ENCODE measurements at regions of chr1 and their contacts with region 1.

Region 1: GRCh38 chr1:203839059-203839458 is 22.3 kb upstream of the SNRPE start:
- DNase-seq: no peak
- ATAC-seq: peak in 2 of 8 donors; percentile 61 to 68
- H3K4me3 ChIP-seq: no peak overlapping the region
- H3K27ac ChIP-seq: no peak overlapping the region
- H3K4me1 ChIP-seq: peaks cover 0 to 14% (median 4%) of the 10 kb centered on the region in 9 donors
- H3K27me3 ChIP-seq: no peaks in the 10 kb centered on the region
- CTCF ChIP-seq: no peak

Region 2: GRCh38 chr1:203726417-203726867 is 112.6 kb before region 1 on chr1:
- intact Hi-C with region 1: loop called in 2 of 10 experiments (anchors 10 kb)
- DNase-seq: no peak
- ATAC-seq: peak in 3 of 8 donors; percentile 25 to 66 (median 53)
- H3K4me3 ChIP-seq: no peak overlapping the region
- H3K27ac ChIP-seq: no peak overlapping the region
- H3K4me1 ChIP-seq: peaks cover 0 to 9% (median 0%) of the 10 kb centered on the region in 9 donors
- H3K27me3 ChIP-seq: no peaks in the 10 kb centered on the region
- CTCF ChIP-seq: no peak

Region 3: GRCh38 chr1:203733009-203733863 is 105.8 kb before region 1 on chr1:
- intact Hi-C with region 1: loop called in 2 of 10 experiments (anchors 10 kb)
- DNase-seq: no peak
- ATAC-seq: no peak
- H3K4me3 ChIP-seq: no peak overlapping the region
- H3K27ac ChIP-seq: no peak overlapping the region
- H3K4me1 ChIP-seq: no peaks in the 10 kb centered on the region
- H3K27me3 ChIP-seq: no peaks in the 10 kb centered on the region
- CTCF ChIP-seq: no peak

Region 4: DNA sequence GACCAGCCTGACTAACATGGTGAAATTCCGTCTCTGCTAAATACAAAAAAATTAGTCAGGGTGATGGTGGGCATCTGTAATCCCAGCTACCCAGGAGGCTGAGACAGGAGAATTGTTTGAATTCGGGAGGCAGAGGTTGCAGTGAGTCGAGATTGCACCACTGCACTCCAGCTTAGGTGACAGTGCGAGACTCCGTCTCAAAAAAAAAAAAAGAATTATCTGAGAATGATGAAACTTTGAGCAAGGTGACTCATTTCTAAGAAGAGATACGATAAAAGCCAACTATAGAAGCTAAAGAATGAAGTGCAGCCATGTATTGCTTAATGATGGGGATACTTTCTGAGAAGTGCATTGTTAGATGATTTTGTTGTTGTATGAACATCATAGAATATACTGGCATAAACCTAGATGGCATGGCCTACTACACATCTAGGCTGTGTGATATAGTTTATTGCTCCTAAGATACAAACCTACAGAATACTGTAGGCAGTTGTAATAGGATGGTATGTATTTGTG is 87.0 kb after region 1 on chr1:
- intact Hi-C with region 1: no loop called
- DNase-seq: no peak
- ATAC-seq: no peak
- H3K4me3 ChIP-seq: no peak overlapping the region
- H3K27ac ChIP-seq: no peak overlapping the region
- H3K4me1 ChIP-seq: no peaks in the 10 kb centered on the region
- H3K27me3 ChIP-seq: no peaks in the 10 kb centered on the region
- CTCF ChIP-seq: no peak